Activated CD4-positive, alpha-beta memory T cell treated with anti-CD3 and anti-CD28 coated beads, Interleukin-2, amount 10 ng/mL, durations not matched to agents 7 days and 5 days (primary cell): ENCODE measurements at regions of chr2 and their contacts with region 1.

Region 1: DNA sequence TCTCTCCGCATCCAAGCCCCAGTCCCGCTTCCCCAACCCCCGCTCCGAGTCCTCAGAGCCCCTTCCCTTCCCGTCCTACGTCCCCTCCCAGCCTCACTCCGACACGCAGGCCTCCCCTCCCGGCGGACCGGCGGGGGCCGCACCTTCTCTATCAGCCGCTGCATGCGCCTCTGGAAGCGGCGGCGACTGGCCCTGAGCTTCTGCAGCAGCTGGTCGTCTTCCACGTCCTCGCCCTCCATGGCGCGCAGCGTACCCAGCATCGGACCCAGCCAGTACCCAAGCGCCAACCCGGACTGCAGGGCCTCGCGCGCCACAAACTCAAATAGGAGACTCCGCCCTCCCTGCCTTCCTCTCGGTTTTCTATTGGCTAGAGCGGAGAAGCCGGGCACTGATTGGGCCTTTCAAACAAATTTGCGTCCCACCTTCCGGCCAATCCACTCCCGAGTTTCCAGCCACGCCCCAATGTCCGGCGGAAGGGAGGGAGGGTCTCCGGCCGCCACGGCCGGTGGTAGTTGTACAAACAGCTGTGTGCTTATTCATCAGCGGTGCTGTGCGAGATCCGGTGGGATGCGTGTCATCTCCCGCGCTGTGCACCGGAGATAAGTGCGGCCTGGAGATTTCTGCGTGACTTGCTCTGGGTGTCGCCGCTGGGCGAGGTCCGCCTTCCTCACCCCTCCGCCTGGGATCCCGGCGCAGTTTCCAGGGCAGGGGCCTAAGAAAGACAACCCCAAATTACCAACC is at the start of gene HJURP:
- DNase-seq: peak; percentile 97
- H3K4me3 Mint-ChIP-seq: peak within 1 kb of the TSS; percentile 99
- H3K27ac Mint-ChIP-seq: peak within 1 kb of the TSS; percentile 98
- H3K4me1 Mint-ChIP-seq: peaks cover 54% of the 10 kb centered on the region
- H3K27me3 Mint-ChIP-seq: peaks cover 2% of the 10 kb centered on the region
- total RNA-seq, gene HJURP: 126 to 129 TPM

Region 2: DNA sequence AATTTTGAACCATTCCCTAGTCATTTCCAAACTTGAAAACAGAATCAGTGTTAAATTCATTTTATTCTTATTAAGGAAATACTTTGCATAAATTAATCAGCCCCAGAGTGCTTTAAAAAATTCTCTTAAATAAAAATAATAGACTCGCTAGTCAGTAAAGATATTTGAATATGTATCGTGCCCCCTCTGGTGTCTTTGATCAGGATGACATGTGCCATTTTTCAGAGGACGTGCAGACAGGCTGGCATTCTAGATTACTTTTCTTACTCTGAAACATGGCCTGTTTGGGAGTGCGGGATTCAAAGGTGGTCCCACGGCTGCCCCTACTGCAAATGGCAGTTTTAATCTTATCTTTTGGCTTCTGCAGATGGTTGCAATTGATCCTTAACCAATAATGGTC is 81.8 kb before region 1 on chr2:
- CTCF ChIA-PET with region 1: no interaction called
- POLR2A ChIA-PET with region 1: no interaction called
- DNase-seq: no peak
- H3K4me3 Mint-ChIP-seq: no peak overlapping the region
- H3K27ac Mint-ChIP-seq: no peak overlapping the region
- H3K4me1 Mint-ChIP-seq: no peaks in the 10 kb centered on the region
- H3K27me3 Mint-ChIP-seq: peaks cover 7% of the 10 kb centered on the region

Region 3: DNA sequence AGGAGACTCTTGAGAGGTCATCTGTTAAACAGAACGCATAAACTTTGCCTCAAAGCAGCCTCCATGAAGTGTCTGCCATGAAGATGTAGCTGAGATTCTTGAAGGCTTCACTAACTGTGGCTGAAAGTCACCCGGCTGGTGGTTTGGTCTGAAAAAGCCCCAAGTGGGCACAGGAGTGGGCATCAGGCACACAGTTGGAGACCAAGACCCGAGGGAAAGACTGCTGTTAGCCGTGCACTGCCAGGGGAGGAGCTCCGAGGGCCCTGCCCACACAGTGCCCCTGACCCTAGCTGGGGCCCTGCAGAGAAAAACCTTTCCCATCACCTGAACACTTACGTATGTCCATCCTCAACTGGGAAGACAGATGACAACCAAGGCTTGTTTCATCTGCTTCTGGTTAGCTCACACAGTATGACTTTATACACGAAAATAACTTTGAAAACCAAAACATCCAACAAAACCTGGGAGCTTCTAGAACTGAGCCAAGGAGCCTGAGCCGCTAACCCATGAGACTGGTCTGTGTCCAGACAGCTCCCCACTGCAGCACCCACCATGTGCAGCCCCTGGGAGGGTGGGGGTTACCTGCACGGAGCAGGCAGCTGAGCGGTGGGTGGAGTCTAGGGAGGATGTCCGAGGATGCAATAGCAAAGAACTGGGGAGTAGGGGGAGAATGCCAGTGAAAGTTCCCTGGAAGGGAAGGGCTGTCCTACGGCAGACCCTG is 15.5 kb before region 1 on chr2:
- CTCF ChIA-PET with region 1: interaction called, 3 read pairs
- POLR2A ChIA-PET with region 1: interaction called, 13 read pairs
- DNase-seq: peak; percentile 15
- H3K4me3 Mint-ChIP-seq: no peak overlapping the region
- H3K27ac Mint-ChIP-seq: peak overlapping the region; percentile 29
- H3K4me1 Mint-ChIP-seq: peaks cover 59% of the 10 kb centered on the region
- H3K27me3 Mint-ChIP-seq: no peaks in the 10 kb centered on the region

Region 4: GRCh38 chr2:233844064-233844807 is 10.2 kb before region 1 on chr2:
- CTCF ChIA-PET with region 1: interaction called, 5 read pairs
- POLR2A ChIA-PET with region 1: interaction called, 13 read pairs
- DNase-seq: peak; percentile 8
- H3K4me3 Mint-ChIP-seq: no peak overlapping the region
- H3K27ac Mint-ChIP-seq: no peak overlapping the region
- H3K4me1 Mint-ChIP-seq: peaks cover 65% of the 10 kb centered on the region
- H3K27me3 Mint-ChIP-seq: no peaks in the 10 kb centered on the region

Region 5: DNA sequence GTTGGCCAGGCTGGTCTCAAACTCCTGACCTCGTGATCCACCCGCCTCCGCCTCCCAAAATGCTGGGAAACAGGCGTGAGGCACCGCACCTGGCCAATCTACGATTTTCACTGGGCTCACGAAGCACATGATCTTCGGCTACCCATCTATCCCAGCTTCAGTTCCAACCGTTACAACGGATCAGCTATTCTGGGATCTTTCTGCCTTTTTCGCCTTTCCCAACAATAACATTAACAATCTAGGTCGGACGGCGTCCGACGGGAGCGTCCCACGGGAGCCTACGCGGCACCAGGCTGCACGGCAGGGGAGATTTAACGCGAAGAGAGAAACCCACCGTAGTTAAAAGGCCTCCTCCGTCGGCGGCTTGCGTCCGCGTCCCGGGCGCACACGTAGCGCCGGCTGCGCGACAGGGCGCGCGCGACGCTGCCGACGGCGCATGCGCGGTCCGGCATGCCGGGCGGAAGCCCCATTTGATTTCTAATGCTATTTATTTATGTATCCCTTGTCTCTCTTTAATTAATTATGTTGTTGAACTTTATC is 13.7 kb after region 1 on chr2 and contains the start of gene MSL3B:
- CTCF ChIA-PET with region 1: interaction called, 16 read pairs
- POLR2A ChIA-PET with region 1: interaction called, 9 read pairs
- DNase-seq: peak; percentile 63
- H3K4me3 Mint-ChIP-seq: peak within 1 kb of the TSS; percentile 79
- H3K27ac Mint-ChIP-seq: peak within 1 kb of the TSS; percentile 9
- H3K4me1 Mint-ChIP-seq: peaks cover 25% of the 10 kb centered on the region
- H3K27me3 Mint-ChIP-seq: peaks cover 25% of the 10 kb centered on the region

Region 6: GRCh38 chr2:233892793-233893192 is 38.4 kb after region 1 on chr2:
- CTCF ChIA-PET with region 1: no interaction called
- POLR2A ChIA-PET with region 1: no interaction called
- DNase-seq: no peak
- H3K4me3 Mint-ChIP-seq: no peak overlapping the region
- H3K27ac Mint-ChIP-seq: no peak overlapping the region
- H3K4me1 Mint-ChIP-seq: no peaks in the 10 kb centered on the region
- H3K27me3 Mint-ChIP-seq: peaks cover 24% of the 10 kb centered on the region